Lower leg skin (tissue), 4 donors: ENCODE measurements at regions of chr1 and their contacts with region 1.

Region 1: DNA sequence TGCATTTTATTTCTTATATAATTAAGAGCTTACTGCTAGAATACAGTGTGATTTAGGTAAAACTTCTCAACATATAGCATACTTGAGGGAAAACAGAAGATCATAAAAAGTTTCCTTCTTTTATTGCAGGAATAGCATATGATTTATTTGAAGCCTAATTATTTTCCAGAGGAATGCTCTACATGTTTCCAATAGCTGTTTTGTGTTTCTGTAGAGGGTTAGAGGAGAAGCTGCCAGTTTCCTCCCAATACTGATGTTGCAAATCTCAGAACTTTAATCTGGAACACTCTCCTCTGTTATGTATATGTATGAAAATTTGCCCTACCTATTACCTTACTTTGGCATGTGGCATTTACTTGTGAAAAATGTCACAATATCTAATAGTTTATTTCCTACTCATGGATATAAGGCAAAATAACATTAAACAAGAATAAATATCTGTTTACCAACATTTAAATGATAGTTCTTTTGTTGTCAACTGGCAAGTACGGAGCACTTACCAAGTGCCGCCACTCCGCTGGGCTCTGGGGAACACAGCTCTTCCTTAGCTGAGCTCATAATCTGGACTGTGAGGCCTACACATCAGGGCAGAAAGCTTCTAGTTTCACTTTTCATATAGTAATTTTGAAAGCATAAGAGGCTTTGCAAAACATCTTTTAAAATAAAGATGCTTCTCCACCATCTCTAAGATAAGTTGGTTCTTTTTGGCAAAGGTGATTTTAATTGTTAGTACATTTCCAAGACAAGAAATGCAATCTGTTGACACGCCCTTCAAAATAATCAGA is 239.8 kb upstream of the C1orf105 start:
- DNase-seq: peak; percentile 19 to 81
- H3K4me3 ChIP-seq: no peak overlapping the region
- CTCF ChIP-seq: no peak
- POLR2A ChIP-seq: no peak

Region 2: DNA sequence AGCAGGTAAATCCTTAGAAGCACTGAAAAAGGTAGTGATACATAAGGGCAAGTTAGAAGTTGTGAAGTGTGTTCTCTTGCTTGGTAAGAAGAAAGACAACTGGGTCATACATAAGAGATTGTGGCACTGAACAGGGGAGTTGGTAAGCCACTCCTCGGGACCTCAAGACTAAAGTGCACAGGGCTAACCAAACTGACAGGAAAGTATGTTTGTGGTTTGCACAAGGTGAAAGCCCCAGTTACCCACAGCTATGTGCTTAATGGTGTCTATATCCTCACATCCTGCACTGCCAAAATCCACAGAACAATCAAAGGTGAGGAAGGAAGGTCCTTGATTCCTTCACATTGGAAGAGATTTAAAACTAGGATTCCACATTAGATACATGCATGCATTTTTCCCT is 62.9 kb before region 1 on chr1:
- intact Hi-C with region 1: loop called (anchors 2 kb)
- DNase-seq: no peak
- H3K4me3 ChIP-seq: no peak overlapping the region
- CTCF ChIP-seq: no peak
- POLR2A ChIP-seq: no peak

Region 3: DNA sequence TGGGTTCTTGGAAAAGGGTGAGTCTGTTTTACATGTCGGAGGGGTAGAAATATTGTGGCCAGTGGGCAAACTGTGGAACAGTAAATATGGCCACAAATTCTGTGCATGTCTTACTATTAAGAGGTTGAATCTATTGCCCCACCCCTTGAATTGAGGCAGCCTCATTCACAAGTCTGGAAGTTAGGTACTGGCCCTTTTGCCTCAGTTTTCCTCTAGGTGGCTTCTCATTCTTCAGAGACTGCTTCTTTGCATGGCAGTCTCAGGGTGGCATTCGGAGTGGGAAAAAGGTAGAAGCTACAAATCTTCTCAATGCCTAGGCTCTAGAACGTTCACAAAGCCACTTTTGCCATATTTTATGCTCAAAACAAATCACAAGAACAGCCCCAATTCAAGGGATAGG is 1365.0 kb after region 1 on chr1:
- intact Hi-C with region 1: loop called (anchors 5 kb)
- DNase-seq: no peak
- H3K4me3 ChIP-seq: no peak overlapping the region
- CTCF ChIP-seq: no peak
- POLR2A ChIP-seq: no peak